ENCODE measurements at regions of chr10 and their contacts with region 1.

Region 1: GRCh38 chr10:99560277-99561126 is 27.8 kb downstream of the NKX2-3 start:
- DNase-seq: peak; percentile 56
- H3K4me3 ChIP-seq: peak overlapping the region in 1 of 2 experiments; percentile 45; a peak in 2 of 4 replicates
- H3K27ac ChIP-seq: no peak overlapping the region
- H3K4me1 ChIP-seq: no peaks in the 10 kb centered on the region
- H3K27me3 ChIP-seq: peaks cover 53% of the 10 kb centered on the region
- CTCF ChIP-seq: peak; percentile 78
- EP300 ChIP-seq: no peak
- RAD21 ChIP-seq: peak; percentile 69

Region 2: DNA sequence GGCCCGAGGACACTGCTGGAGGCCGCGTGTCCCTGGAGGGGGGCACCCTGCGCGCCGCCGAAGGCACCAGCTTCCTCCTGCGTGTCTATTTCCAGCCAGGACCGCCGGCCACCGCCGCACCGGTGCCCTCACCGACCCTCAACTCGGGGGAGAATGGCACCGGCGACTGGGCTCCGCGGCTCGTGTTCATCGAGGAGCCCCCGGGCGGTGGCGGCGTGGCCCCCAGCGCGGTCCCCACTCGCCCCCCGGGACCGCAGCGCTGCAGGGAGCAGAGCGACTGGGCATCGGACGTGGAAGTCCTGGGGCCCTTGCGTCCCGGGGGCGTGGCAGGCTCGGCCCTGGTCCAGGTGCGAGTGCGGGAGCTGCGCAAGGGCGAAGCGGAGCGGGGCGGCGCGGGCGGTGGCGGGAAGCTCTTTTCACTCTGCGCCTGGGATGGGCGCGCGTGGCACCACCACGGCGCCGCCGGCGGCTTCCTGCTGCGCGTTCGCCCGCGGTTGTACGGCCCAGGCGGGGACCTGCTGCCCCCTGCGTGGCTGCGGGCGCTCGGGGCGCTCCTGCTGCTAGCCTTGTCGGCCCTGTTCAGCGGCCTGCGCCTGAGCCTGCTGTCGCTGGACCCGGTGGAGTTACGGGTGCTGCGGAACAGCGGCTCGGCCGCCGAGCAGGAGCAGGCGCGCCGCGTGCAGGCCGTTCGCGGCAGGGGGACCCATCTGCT is 230.8 kb before region 1 on chr10:
- CTCF ChIA-PET with region 1: no interaction called
- POLR2A ChIA-PET with region 1: no interaction called
- DNase-seq: peak; percentile 83
- H3K4me3 ChIP-seq: peak overlapping the region; percentile 46 to 47
- H3K27ac ChIP-seq: no peak overlapping the region
- H3K4me1 ChIP-seq: peaks cover 0 to 18% of the 10 kb centered on the region in 2 experiments; a peak in 1 of 4 replicates
- H3K27me3 ChIP-seq: peaks cover 27% of the 10 kb centered on the region
- CTCF ChIP-seq: no peak
- EP300 ChIP-seq: no peak
- RAD21 ChIP-seq: no peak

Region 3: GRCh38 chr10:99532687-99533495 is 27.6 kb before region 1 on chr10 and contains the start of gene NKX2-3:
- CTCF ChIA-PET with region 1: no interaction called
- POLR2A ChIA-PET with region 1: no interaction called
- DNase-seq: peak; percentile 84
- H3K4me3 ChIP-seq: peak within 1 kb of the TSS in 1 of 2 experiments; percentile 14; a peak in 1 of 4 replicates
- H3K27ac ChIP-seq: no peak within 1 kb of the TSS
- H3K4me1 ChIP-seq: no peaks in the 10 kb centered on the region; a peak in 1 of 4 replicates
- H3K27me3 ChIP-seq: peaks cover 96% of the 10 kb centered on the region
- CTCF ChIP-seq: no peak
- EP300 ChIP-seq: no peak
- RAD21 ChIP-seq: no peak
- polyA plus RNA-seq, gene NKX2-3: not detected in 2 replicates

Region 4: GRCh38 chr10:99548041-99548530 is 12.4 kb before region 1 on chr10:
- CTCF ChIA-PET with region 1: interaction called, 17 read pairs
- POLR2A ChIA-PET with region 1: no interaction called
- DNase-seq: peak; percentile 35
- H3K4me3 ChIP-seq: no peak overlapping the region
- H3K27ac ChIP-seq: no peak overlapping the region
- H3K4me1 ChIP-seq: peaks cover 0 to 6% of the 10 kb centered on the region in 2 experiments; a peak in 1 of 4 replicates
- H3K27me3 ChIP-seq: peaks cover 80% of the 10 kb centered on the region; the same call in 1 of the 2 replicates
- CTCF ChIP-seq: peak; percentile 44
- EP300 ChIP-seq: no peak
- RAD21 ChIP-seq: peak; percentile 36

Region 5: DNA sequence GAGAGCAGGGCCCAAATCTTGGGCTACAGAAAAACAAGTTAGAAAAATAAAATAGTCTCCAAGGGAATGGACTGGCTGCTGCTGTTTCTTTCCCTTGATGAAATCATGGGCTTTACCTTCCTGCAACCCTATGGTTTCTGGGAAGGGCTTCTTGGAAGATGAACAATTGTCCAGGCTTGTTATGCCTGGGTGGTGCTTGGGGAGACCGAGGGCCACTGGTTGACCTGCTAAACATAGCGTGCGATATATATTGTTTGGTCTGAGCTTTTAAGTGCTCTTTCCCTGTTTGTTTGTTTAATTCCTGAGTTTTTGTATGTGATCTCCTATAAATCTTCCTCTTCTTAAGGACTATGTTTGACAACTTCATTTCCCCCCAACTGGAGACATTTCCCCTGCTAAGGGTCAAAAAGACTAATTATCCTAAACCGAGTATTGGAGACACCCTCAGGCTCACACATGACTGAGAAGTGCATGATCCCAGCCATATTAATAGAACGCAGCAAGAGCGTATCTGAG is 21.8 kb after region 1 on chr10:
- CTCF ChIA-PET with region 1: interaction called, 15 read pairs
- POLR2A ChIA-PET with region 1: no interaction called
- DNase-seq: no peak
- H3K4me3 ChIP-seq: no peak overlapping the region
- H3K27ac ChIP-seq: no peak overlapping the region
- H3K4me1 ChIP-seq: no peaks in the 10 kb centered on the region
- H3K27me3 ChIP-seq: peaks cover 92% of the 10 kb centered on the region
- CTCF ChIP-seq: no peak
- EP300 ChIP-seq: no peak
- RAD21 ChIP-seq: no peak

Region 6: GRCh38 chr10:99612167-99612831 is 51.8 kb after region 1 on chr10:
- CTCF ChIA-PET with region 1: interaction called, 49 read pairs
- POLR2A ChIA-PET with region 1: no interaction called
- DNase-seq: peak; percentile 77
- H3K4me3 ChIP-seq: peak overlapping the region in 1 of 2 experiments; percentile 11; a peak in 1 of 4 replicates
- H3K27ac ChIP-seq: no peak overlapping the region
- H3K4me1 ChIP-seq: no peaks in the 10 kb centered on the region; a peak in 1 of 4 replicates
- H3K27me3 ChIP-seq: no peaks in the 10 kb centered on the region
- CTCF ChIP-seq: peak; percentile 84
- EP300 ChIP-seq: no peak
- RAD21 ChIP-seq: peak; percentile 87